ENCODE measurements at regions of chr11 and their contacts with region 1.

Region 1: GRCh38 chr11:74449369-74449931 is 17.9 kb downstream of the KCNE3 start:
- DNase-seq: peak; percentile 26 to 73
- H3K4me3 ChIP-seq: no peak overlapping the region
- H3K27ac ChIP-seq: peak overlapping the region in 1 of 2 donors; percentile 22
- H3K4me1 ChIP-seq: peaks cover under 1 to 2% of the 10 kb centered on the region in 2 donors
- H3K27me3 ChIP-seq: no peaks in the 10 kb centered on the region
- CTCF ChIP-seq: peak; percentile 71 to 91 (median 83)
- POLR2A ChIP-seq: no peak

Region 2: GRCh38 chr11:74371279-74372049 is 78.0 kb before region 1 on chr11:
- intact Hi-C with region 1: no loop called
- DNase-seq: no peak
- H3K4me3 ChIP-seq: no peak overlapping the region
- H3K27ac ChIP-seq: no peak overlapping the region
- H3K4me1 ChIP-seq: no peaks in the 10 kb centered on the region
- H3K27me3 ChIP-seq: no peaks in the 10 kb centered on the region
- CTCF ChIP-seq: no peak
- POLR2A ChIP-seq: no peak

Region 3: DNA sequence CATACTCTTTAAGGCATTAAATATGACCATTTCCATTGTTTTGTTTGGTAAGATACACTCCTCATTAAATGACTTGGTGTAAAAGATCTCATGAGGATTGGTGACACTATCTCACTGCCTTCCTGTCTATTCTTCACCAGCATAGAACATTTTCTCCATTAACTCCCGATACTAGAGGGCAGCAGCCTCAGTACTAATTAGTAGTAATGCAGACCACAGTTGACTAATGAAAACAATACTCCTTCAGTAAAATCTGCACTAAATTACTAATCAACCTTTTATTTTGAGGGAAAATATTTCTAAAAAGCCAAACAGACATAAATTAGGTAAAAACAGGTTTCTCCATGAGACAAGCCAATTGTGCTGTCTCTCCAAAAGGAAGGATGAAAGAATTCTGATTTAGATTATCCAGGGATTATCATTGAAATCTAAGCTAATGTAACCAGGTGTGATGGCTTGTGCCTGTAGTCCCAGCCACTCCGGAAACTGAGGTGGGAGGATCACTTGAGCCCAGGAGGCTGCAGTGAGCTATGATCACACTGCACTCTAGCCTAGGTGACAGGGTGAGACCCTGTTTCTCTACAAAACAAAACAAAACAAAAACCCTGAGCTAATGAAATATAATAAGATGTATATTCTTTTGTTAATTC is 60.6 kb before region 1 on chr11:
- intact Hi-C with region 1: loop called (anchors 5 kb)
- DNase-seq: peak; percentile 42 to 79
- H3K4me3 ChIP-seq: no peak overlapping the region
- H3K27ac ChIP-seq: no peak overlapping the region
- H3K4me1 ChIP-seq: no peaks in the 10 kb centered on the region
- H3K27me3 ChIP-seq: no peaks in the 10 kb centered on the region
- CTCF ChIP-seq: peak; percentile 67 to 90 (median 72)
- POLR2A ChIP-seq: no peak

Region 4: GRCh38 chr11:74570266-74571061 is 121.0 kb after region 1 on chr11:
- intact Hi-C with region 1: loop called (anchors 10 kb)
- DNase-seq: peak; percentile 25 to 29
- H3K4me3 ChIP-seq: no peak overlapping the region
- H3K27ac ChIP-seq: no peak overlapping the region
- H3K4me1 ChIP-seq: no peaks in the 10 kb centered on the region
- H3K27me3 ChIP-seq: no peaks in the 10 kb centered on the region
- CTCF ChIP-seq: peak; percentile 51 to 82 (median 61)
- POLR2A ChIP-seq: no peak